ENCODE measurements at regions of chr6 and their contacts with region 1.

Region 1: GRCh38 chr6:151087861-151088598 is 151.7 kb upstream of the AKAP12 start:
- DNase-seq: no peak
- ATAC-seq: peak; percentile 91

Region 2: GRCh38 chr6:151029970-151030369 is 58.1 kb before region 1 on chr6:
- intact Hi-C with region 1: no loop called
- DNase-seq: no peak
- ATAC-seq: no peak

Region 3: GRCh38 chr6:151044465-151045441 is 43.3 kb before region 1 on chr6:
- intact Hi-C with region 1: loop called (anchors 5 kb)
- DNase-seq: no peak
- ATAC-seq: no peak

Region 4: DNA sequence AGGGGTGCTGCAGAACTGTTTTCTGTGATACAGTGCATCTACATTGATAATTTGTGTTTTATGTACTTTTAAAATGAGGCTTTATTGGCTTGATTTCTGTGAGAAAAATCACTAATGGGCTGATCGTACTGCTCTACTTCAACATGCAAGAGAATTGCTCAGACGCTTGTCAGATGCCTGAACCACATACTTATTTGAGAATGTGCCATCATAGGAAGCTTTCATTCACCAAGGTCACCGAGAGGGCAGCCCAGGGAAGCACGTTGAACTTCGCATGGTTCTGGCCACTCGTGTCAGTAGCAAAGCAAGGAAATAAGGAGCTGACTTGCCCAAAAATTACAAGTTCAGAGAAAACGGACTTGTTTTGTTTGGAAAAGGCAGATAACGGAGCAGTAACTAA is 16.7 kb before region 1 on chr6:
- intact Hi-C with region 1: loop called (anchors 2 kb)
- DNase-seq: no peak
- ATAC-seq: peak; percentile 80